ENCODE measurements at regions of chr5 and their contacts with region 1.

Region 1: DNA sequence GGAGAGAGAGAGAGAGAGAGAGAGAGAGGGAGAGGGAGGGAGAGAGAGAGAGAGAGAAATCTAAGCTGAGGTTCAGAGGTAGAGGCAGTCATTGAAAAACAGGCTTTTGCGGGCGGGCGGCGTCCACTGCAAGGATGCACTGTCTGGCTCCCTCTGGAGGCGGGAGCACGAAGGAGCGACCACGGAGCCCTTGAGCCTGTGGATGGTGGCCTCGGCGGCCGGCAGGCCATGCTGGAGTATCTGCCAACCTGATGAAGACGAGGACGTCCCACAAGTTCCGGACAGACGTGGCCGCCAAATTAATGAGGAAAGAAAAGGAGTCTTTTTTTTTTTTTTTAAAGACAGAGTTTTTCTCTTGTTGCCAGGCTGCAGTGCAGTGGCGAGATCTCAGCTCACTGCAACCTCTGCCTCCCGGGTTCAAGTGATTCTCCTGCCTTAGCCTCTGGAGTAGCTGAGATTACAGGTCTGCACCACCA is 2.2 kb upstream of the CCDC125 start:
- DNase-seq: peak; percentile 88
- H3K4me3 Mint-ChIP-seq: peak overlapping the region; percentile 24
- H3K27ac Mint-ChIP-seq: no peak overlapping the region
- H3K4me1 Mint-ChIP-seq: peaks cover 13% of the 10 kb centered on the region
- H3K27me3 Mint-ChIP-seq: no peaks in the 10 kb centered on the region

Region 2: DNA sequence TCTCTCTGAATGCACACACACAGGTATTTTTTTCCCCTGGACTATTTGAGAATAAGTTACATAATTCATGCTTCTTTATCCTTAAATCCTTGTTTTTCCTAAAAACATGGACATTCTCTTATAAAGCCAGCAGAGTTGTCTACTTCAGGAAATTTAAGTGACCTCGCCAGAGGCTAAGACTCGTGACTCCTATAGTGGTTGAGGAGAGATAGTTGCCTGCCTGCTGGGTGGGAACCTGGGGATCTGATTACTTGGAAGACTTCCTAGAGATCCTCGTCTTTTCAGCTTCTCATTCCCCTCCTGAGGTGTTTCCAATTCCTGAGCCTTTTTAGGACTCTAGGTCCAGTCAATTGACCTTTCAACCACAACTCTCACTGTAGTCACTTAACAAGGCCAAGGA is 235.5 kb before region 1 on chr5:
- CTCF ChIA-PET with region 1: no interaction called
- intact Hi-C with region 1: no loop called
- DNase-seq: no peak
- H3K4me3 Mint-ChIP-seq: no peak overlapping the region
- H3K27ac Mint-ChIP-seq: no peak overlapping the region
- H3K4me1 Mint-ChIP-seq: peaks cover 35% of the 10 kb centered on the region
- H3K27me3 Mint-ChIP-seq: no peaks in the 10 kb centered on the region

Region 3: GRCh38 chr5:69166686-69167492 is 167.9 kb before region 1 on chr5 and contains the start of gene CCNB1:
- CTCF ChIA-PET with region 1: no interaction called
- intact Hi-C with region 1: loop called (anchors 1 kb)
- DNase-seq: peak; percentile 99
- H3K4me3 Mint-ChIP-seq: peak within 1 kb of the TSS; percentile 95
- H3K27ac Mint-ChIP-seq: peak within 1 kb of the TSS; percentile 87
- H3K4me1 Mint-ChIP-seq: peaks cover 20% of the 10 kb centered on the region
- H3K27me3 Mint-ChIP-seq: no peaks in the 10 kb centered on the region
- total RNA-seq, gene CCNB1: 209 to 211 TPM

Measured in activated naive CD4-positive, alpha-beta T cell treated with anti-CD3 and anti-CD28 coated beads for 36 hours (primary cell).